Activated B cell treated with CpG ODN at 0.5 μM for 24 hours (primary cell): ENCODE measurements at regions of chr17 and their contacts with region 1.

Region 1: DNA sequence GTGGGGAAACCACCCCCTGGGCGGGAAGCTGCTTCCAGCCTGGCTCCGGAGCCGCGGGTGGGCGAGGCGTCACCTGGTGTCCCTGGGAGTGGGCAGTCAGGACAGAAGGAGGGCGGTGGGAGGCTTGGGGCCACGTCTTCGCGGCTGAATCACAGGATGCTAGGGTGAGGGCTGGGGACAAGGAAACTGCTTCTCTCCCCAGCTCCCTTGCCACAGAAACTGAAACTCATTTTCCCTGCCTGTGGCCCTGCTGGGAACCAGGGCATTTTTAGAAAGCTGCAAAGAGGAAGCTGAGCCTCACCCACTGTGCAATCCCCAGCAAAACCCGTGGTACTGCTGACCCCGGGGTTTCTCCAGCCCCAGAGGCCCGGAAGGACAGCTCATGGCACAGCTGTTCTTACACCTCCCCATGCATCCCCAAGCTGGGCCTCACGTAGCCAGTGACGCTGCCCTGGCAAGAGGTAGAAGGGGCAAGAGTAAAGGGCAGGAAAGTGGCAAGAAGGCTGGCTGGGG is 8.2 kb downstream of the RHBDF2 start:
- DNase-seq: peak; percentile 53
- ATAC-seq: peak; percentile 59
- H3K4me3 Mint-ChIP-seq: peak overlapping the region; percentile 82
- H3K27ac Mint-ChIP-seq: peak overlapping the region; percentile 95
- H3K4me1 Mint-ChIP-seq: peaks cover 95% of the 10 kb centered on the region
- H3K27me3 Mint-ChIP-seq: no peaks in the 10 kb centered on the region
- CTCF ChIP-seq: no peak

Region 2: DNA sequence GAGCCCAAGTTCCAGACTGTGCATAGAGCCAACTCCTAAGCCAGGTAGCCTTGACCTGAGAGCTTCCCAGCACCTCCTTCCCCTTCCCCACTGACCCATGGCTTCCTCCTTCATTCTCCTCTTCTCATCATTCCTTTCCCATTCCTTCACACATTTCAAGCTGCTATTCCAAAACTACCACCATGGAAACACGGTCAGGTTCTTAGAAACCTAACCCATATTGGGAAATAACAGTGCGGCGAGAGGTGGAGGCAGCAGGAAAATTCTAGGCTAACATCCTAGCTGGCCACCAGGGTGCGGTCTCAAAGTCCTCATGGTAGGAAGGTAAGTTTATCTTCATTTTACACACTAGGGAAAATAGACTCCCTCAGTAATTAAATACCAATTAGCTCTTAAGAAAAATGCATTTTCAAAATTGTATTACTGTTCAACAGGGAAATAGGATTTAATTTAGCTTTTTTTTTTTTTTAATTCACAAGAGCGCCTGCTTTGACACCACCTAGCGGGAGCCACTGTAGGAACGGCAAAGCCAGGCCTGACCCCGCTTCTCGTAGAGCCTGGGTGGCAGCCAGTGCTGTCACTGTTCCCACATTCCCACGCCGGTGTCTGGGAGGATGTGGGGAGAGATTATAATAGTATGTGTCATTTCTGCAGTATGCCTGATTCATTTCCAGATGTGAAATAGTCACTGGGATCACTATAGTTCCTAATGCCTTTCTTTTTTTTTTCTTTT is 122.6 kb before region 1 on chr17:
- CTCF ChIA-PET with region 1: no interaction called
- POLR2A ChIA-PET with region 1: no interaction called
- intact Hi-C with region 1: no loop called
- DNase-seq: no peak
- ATAC-seq: no peak
- H3K4me3 Mint-ChIP-seq: no peak overlapping the region
- H3K27ac Mint-ChIP-seq: no peak overlapping the region
- H3K4me1 Mint-ChIP-seq: no peaks in the 10 kb centered on the region
- H3K27me3 Mint-ChIP-seq: peaks cover 4% of the 10 kb centered on the region
- CTCF ChIP-seq: no peak

Region 3: DNA sequence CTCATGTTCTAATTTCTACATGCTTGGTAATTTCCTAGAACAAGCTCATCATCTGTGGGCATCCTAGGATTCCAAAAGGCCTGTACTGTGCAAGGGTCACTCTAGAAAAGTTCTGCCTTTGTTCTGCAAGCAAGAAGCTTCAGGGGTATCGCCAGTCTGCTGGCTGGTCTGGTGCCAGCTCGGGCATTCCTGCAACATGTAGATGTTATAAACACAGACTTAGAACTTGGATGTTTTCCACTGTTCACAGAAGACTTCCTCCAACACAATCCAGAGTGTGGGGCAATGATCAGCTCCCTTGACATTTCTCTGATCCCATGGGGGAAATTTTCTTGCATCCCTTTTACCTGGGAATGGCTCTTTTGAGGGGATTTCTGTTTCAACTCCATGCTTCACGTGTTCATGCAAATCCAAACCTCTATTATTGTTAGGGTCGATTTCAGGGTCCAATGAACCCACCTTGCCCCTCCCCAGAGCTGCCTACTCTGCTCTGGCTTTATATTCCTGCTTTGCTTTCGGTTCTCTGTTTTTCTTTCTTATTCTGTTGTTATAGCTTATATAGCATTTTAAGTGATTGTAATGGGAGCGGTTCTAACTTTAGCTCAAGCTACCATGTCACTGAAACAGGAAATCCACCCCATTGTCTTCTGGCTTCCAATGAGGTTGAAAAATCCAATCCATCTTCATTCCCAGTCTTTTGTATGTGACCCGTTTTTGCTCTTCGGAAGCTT is 65.4 kb before region 1 on chr17:
- CTCF ChIA-PET with region 1: interaction called, 4 read pairs
- POLR2A ChIA-PET with region 1: interaction called, 17 read pairs
- intact Hi-C with region 1: no loop called
- DNase-seq: no peak
- ATAC-seq: peak; percentile 86
- H3K4me3 Mint-ChIP-seq: peak overlapping the region; percentile 32
- H3K27ac Mint-ChIP-seq: peak overlapping the region; percentile 77
- H3K4me1 Mint-ChIP-seq: peaks cover 80% of the 10 kb centered on the region
- H3K27me3 Mint-ChIP-seq: no peaks in the 10 kb centered on the region
- CTCF ChIP-seq: no peak

Region 4: DNA sequence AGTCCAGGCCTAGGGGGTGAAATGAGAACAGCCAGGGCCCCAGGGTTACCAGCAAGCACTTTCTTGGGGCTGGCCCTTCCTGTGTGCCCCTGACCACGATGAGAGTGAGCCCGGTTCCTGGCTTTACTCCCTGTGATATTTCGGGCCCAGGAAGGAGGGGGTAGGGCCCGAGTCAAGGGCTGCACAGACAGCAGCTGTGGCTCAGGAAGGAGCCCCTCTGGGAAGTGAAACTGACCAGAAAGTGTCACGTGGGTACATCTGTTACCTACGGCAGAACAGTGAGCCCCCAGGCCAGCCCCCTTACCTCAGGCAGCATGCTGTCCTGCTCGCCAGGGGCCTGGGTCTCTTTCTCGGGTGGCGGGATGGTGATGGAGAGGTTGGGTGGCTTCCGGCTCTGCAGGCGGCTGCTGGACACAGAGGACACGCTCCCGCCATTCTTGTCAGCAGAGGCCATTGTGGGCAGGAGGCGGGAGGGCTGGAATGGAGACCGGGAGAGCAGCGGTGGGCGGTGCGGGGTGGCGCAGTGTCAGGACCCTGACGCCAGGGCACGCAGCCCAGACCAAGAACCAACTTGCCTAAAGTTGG is 11.9 kb before region 1 on chr17:
- CTCF ChIA-PET with region 1: interaction called, 21 read pairs
- POLR2A ChIA-PET with region 1: interaction called, 769 read pairs
- intact Hi-C with region 1: loop called (anchors 1 kb)
- DNase-seq: peak; percentile 61
- ATAC-seq: peak; percentile 64
- H3K4me3 Mint-ChIP-seq: peak overlapping the region; percentile 81
- H3K27ac Mint-ChIP-seq: peak overlapping the region; percentile 92
- H3K4me1 Mint-ChIP-seq: peaks cover 79% of the 10 kb centered on the region
- H3K27me3 Mint-ChIP-seq: no peaks in the 10 kb centered on the region
- CTCF ChIP-seq: no peak